PC-9 (cell line): ENCODE measurements at regions of chr3 and their contacts with region 1.

Region 1: GRCh38 chr3:192444096-192444790 is 283.1 kb downstream of the FGF12 start:
- DNase-seq: peak; percentile 58 to 73
- H3K4me3 ChIP-seq: no peak overlapping the region
- H3K27ac ChIP-seq: no peak overlapping the region
- H3K4me1 ChIP-seq: no peaks in the 10 kb centered on the region
- H3K27me3 ChIP-seq: no peaks in the 10 kb centered on the region
- CTCF ChIP-seq: peak; percentile 100

Region 2: GRCh38 chr3:190811775-190812480 is 1632.3 kb before region 1 on chr3:
- CTCF ChIA-PET with region 1: no interaction called
- POLR2A ChIA-PET with region 1: no interaction called
- intact Hi-C with region 1: loop called (anchors 1 kb)
- DNase-seq: peak in 1 of 2 experiments; percentile 41
- H3K4me3 ChIP-seq: no peak overlapping the region
- H3K27ac ChIP-seq: no peak overlapping the region
- H3K4me1 ChIP-seq: no peaks in the 10 kb centered on the region
- H3K27me3 ChIP-seq: no peaks in the 10 kb centered on the region
- CTCF ChIP-seq: peak; percentile 80

Region 3: DNA sequence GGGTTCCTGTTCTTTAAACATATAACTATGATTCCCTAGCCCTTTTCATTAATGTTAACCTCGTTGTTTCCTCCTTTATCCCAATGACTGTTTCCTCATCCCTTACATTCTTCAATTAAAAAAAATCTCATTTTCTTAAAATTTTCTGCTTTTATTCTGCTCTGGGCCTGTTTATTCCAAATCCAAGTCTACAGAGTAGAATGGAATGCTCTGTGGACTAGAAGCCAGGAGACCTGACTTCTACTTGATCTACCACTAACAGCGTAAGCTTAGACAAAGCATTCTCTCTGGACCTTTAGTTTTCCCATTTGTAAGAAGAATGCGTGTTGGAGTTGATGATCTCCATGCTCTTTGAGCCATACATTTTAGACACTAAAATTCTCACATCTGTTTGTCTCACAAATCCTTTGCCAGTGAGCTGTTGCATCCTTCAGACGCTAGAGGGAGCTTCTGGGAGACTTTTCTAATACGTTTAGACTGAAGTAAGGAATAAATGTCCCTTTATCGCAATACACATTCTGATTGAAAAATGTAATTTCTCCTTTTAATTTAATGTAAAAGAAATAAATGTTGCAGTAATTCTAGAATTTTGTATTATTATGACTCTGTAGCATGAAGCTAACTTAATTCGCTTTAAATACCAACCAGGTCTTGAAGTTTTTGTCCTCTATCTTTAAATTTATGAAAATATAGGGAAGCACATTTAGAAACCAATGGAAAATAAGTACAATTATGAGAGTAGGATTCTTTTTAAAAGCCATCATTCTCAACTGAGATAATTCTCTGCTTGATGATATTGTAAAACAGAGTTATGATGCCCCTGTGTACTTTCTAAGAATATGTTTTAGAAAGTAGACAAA is 1560.0 kb before region 1 on chr3:
- CTCF ChIA-PET with region 1: interaction called, 4 read pairs
- POLR2A ChIA-PET with region 1: no interaction called
- intact Hi-C with region 1: loop called (anchors 2 kb)
- DNase-seq: peak; percentile 48 to 50
- H3K4me3 ChIP-seq: no peak overlapping the region
- H3K27ac ChIP-seq: no peak overlapping the region
- H3K4me1 ChIP-seq: no peaks in the 10 kb centered on the region
- H3K27me3 ChIP-seq: no peaks in the 10 kb centered on the region
- CTCF ChIP-seq: peak; percentile 97

Region 4: GRCh38 chr3:191889756-191890155 is 554.5 kb before region 1 on chr3:
- CTCF ChIA-PET with region 1: no interaction called
- POLR2A ChIA-PET with region 1: no interaction called
- intact Hi-C with region 1: loop called (anchors 10 kb)
- DNase-seq: peak; percentile 27 to 74
- H3K4me3 ChIP-seq: no peak overlapping the region
- H3K27ac ChIP-seq: no peak overlapping the region
- H3K4me1 ChIP-seq: peaks cover 8% of the 10 kb centered on the region; the same call in 1 of the 2 replicates
- H3K27me3 ChIP-seq: no peaks in the 10 kb centered on the region
- CTCF ChIP-seq: no peak

Region 5: DNA sequence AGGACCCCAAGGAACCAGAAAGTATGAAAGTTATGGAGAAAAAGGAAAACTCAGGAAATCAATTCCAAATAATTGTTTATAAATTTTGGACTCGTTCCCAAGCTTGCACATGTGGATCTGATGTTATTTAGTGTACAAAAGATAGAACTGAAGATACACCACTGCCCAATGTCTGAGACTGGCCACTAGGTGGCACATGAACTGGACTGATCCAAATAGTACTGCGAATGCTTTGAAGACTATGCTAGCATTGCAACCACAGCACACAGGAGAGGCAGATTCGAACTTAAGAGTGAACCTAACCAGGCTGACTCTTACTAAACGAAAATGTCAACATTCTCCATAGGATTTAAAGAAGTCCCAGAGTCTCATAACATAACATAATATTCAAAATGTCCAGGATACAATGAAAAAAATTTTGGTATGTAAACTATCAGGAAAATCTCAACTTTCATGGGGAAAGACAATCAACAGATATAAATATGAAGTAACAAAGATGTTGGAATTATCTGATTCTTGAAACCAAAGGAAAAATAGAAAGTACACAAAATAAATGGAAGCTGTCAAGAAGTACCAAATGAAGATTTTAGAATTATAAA is 313.6 kb before region 1 on chr3:
- CTCF ChIA-PET with region 1: interaction called, 5 read pairs
- POLR2A ChIA-PET with region 1: no interaction called
- intact Hi-C with region 1: loop called (anchors 2 kb)
- DNase-seq: peak; percentile 39 to 53
- H3K4me3 ChIP-seq: no peak overlapping the region
- H3K27ac ChIP-seq: no peak overlapping the region
- H3K4me1 ChIP-seq: no peaks in the 10 kb centered on the region
- H3K27me3 ChIP-seq: no peaks in the 10 kb centered on the region
- CTCF ChIP-seq: peak; percentile 97

Region 6: GRCh38 chr3:192188218-192188835 is 255.9 kb before region 1 on chr3:
- CTCF ChIA-PET with region 1: interaction called, 7 read pairs
- POLR2A ChIA-PET with region 1: no interaction called
- intact Hi-C with region 1: loop called (anchors 2 kb)
- DNase-seq: peak; percentile 39 to 55
- H3K4me3 ChIP-seq: no peak overlapping the region
- H3K27ac ChIP-seq: no peak overlapping the region
- H3K4me1 ChIP-seq: no peaks in the 10 kb centered on the region
- H3K27me3 ChIP-seq: no peaks in the 10 kb centered on the region
- CTCF ChIP-seq: peak; percentile 99

Region 7: GRCh38 chr3:192892981-192893700 is 448.9 kb after region 1 on chr3:
- CTCF ChIA-PET with region 1: no interaction called
- POLR2A ChIA-PET with region 1: no interaction called
- intact Hi-C with region 1: no loop called
- DNase-seq: peak; percentile 89 to 99
- H3K4me3 ChIP-seq: peak overlapping the region; percentile 44; the same call in 1 of the 2 replicates
- H3K27ac ChIP-seq: peak overlapping the region; percentile 88
- H3K4me1 ChIP-seq: peaks cover 96% of the 10 kb centered on the region
- H3K27me3 ChIP-seq: no peaks in the 10 kb centered on the region
- CTCF ChIP-seq: no peak